ENCODE measurements at regions of chr10 and their contacts with region 1.

Region 1: GRCh38 chr10:5601826-5602495 is 64.4 kb downstream of the ASB13 start:
- DNase-seq: no peak
- H3K4me3 ChIP-seq: no peak overlapping the region
- H3K27ac ChIP-seq: peak overlapping the region; percentile 84 to 88
- H3K4me1 ChIP-seq: peaks cover 16 to 54% of the 10 kb centered on the region in 2 donors
- H3K27me3 ChIP-seq: no peaks in the 10 kb centered on the region
- CTCF ChIP-seq: no peak

Region 2: DNA sequence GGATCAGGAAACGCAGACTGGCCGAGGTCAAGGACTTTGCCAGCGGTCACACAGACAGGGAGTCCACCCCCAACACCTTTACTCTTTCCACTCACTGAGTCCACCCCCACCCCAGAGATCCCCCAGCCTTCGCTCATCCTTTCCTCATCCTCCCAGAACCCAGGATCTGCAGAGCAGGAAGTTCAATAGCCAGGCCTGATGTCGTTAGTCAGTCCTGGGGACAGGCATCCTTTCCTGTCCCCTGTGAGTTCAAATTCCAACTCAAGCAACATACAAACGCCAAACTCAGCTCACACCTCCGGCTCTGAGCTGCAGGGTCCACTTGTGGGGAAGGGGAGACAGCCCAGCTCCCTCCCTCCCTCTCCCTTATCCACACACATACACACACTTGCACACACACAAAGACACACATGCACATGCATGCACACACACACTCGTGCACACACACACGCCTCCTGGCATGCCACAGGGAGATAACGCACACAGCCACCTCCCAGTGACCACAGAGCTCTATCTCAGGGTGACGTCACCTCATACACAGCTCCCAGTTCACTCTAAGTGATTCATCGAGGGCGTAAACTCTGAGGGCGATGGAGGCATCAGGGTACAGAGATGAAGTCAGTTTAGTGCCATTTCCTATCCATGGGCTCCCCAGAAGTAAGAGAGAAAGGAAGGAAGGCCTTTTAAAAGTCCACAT is 53.3 kb before region 1 on chr10:
- intact Hi-C with region 1: loop called (anchors 5 kb)
- DNase-seq: peak; percentile 63 to 86
- H3K4me3 ChIP-seq: no peak overlapping the region
- H3K27ac ChIP-seq: peak overlapping the region; percentile 93
- H3K4me1 ChIP-seq: peaks cover 22 to 56% of the 10 kb centered on the region in 2 donors
- H3K27me3 ChIP-seq: no peaks in the 10 kb centered on the region
- CTCF ChIP-seq: no peak

Region 3: GRCh38 chr10:5614155-5614721 is 12.3 kb after region 1 on chr10:
- intact Hi-C with region 1: loop called (anchors 2 kb)
- DNase-seq: no peak
- H3K4me3 ChIP-seq: no peak overlapping the region
- H3K27ac ChIP-seq: peak overlapping the region; percentile 90 to 91
- H3K4me1 ChIP-seq: peaks cover 31 to 71% of the 10 kb centered on the region in 2 donors
- H3K27me3 ChIP-seq: no peaks in the 10 kb centered on the region
- CTCF ChIP-seq: no peak

Region 4: DNA sequence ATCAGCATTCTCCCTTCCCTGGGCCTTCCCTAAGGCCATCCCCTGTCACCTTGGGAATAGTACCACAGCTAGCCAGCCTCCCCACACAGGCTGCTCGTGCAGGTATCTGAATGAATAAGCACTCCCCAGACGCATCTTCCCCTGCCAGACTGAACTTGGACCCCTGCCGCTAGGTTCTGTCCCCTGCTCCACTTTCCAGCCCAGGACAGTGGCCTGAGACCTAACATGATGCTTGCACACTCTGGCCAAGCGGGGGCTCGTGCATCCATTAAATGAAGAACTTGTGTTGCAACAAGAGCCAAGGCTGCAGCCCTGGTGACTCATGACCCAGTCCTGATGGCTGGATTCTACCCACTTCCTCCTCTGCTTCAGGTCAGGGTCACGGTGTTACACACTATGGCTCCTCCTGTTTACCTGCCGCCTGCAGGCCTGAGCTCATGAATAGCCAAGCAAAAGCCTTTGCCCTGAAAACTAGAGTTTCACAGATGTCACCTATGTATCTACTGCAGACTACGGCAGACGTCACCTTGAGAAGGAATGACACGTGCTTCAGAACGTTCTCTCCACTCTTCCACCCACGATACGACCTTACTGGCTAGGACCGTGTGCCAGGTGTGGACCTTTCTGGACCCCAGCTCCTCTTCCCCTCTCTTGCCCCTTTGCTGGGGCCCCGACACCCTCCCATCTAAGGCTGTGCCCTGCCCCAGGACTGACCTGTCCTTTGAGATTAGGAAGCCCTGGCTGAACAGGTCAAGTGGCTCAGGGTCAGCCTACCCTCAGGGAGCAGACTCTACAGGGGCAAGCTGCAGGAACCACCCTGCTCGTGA is 58.0 kb after region 1 on chr10:
- intact Hi-C with region 1: no loop called
- DNase-seq: no peak
- H3K4me3 ChIP-seq: no peak overlapping the region
- H3K27ac ChIP-seq: no peak overlapping the region
- H3K4me1 ChIP-seq: peaks cover 0 to 11% of the 10 kb centered on the region in 2 donors
- H3K27me3 ChIP-seq: no peaks in the 10 kb centered on the region
- CTCF ChIP-seq: no peak

Region 5: DNA sequence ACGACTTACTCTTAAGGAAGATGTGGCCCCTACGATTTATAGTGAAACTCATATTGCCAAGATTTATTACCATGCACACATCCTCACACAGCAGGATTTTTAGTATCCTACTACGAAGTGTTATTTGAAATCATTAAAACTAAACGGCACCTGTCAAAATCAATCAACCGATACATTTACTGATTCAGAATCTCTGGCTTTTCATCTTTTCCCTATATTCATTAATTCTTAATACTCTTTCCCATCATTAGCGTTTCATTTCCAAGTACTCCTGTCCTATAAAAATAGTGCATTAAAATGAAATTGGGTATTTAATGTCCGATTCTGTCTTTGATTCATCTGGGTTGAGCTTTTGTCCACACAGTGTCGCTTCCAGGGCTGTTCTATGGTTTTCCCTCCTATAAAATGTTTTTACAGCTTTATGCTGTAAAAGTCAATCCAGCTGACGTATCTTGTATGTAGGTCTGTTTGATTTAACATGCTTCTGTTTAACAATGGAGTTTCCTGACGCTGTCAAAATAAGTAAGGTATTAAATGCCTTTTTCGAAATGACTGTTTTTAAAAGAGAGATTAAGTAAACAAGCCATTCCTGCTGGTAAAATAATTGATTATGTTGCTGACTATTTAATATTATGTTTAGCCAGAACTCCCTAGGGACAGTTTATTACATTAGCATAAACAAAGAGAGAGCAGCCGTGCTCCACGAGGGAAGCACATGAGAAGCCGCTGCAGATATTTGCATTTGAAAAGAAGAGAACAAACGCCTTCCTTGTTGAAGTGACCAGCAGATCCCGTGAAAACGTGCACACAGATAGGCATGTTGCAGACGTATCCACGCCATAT is 1831.1 kb after region 1 on chr10:
- intact Hi-C with region 1: no loop called
- DNase-seq: no peak
- H3K4me3 ChIP-seq: no peak overlapping the region
- H3K27ac ChIP-seq: no peak overlapping the region
- H3K4me1 ChIP-seq: no peaks in the 10 kb centered on the region
- H3K27me3 ChIP-seq: no peaks in the 10 kb centered on the region
- CTCF ChIP-seq: no peak

Measured in ascending aorta (tissue), 2 donors.